Prostate gland (tissue), 2 donors: ENCODE measurements at regions of chr18 and their contacts with region 1.

Region 1: DNA sequence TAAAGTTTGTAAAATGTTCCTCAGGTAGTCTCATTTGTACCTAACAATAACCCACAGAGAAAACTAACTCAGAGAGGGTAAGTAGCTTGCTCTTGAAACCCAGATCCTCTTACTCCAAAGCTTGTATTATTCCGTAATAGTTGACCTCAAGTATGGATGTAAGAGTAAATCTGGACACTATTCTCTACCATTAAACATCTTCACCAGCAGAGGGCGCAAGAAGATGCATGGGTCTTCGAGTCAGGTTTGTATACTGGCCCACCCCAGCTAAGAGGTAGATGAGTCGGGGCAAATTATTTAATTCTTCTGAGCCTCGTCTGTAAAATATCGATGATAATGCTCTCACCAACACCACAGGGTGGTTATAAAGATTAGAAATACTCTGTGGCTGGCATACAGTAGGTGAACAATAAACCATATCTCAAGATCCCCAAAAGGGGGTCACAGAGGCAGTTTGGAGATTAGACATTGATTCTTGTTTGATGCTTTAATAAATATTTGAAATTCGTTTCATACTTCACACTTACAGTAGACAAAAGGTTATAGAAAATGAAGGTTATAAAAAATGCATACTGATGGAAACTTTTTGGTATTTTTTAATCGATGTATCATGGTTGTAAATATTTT is 3.5 kb upstream of the CABLES1 start:
- DNase-seq: peak; percentile 77
- H3K4me3 ChIP-seq: no peak overlapping the region
- H3K27ac ChIP-seq: no peak overlapping the region
- H3K4me1 ChIP-seq: no peaks in the 10 kb centered on the region
- H3K27me3 ChIP-seq: no peaks in the 10 kb centered on the region
- CTCF ChIP-seq: peak; percentile 76 to 86 (median 81)
- POLR2A ChIP-seq: no peak

Region 2: DNA sequence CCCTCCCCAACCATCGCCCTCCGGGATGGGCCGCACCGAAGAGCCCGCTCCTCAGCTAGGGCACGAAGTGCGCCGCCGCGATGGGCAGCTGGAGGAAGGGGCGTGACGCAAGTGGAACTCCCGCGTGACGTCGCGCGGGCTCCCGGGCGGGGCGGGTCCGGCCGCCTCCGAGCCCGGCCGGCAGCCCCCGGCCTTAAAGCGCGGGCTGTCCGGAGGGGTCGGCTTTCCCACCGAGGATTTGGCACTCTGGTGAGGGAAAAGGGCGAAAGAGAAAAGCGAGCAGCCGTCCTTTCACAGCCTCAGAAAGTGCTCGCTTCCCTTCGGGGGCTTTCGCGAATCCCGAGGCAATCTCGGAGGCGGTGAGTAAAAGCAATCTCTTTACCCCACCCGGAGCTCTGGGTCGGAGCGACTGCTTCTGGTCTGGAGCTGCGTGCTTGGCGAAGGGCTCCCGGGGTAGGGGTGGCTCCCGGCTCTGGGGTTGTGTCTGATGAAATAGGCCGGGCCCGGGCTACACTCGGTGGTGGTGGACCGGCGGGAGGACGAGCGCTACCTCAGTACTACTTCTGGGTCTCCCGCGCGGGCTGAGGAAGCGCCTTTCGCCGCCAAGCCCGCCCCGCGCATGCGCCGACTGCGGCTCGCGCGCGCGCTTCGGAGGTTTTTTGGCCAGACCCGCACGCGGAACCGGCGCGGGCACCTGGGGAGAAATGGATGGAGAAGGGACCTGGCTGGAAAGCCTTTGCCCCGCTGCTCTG is 198.4 kb before region 1 on chr18 and contains the start of gene RBBP8:
- intact Hi-C with region 1: loop called (anchors 10 kb)
- DNase-seq: peak; percentile 84
- H3K4me3 ChIP-seq: peak within 1 kb of the TSS; percentile 85 to 90
- H3K27ac ChIP-seq: peak within 1 kb of the TSS; percentile 99
- H3K4me1 ChIP-seq: no peaks in the 10 kb centered on the region
- H3K27me3 ChIP-seq: no peaks in the 10 kb centered on the region
- CTCF ChIP-seq: peak in 1 of 4 experiments; percentile 31
- POLR2A ChIP-seq: peak; percentile 73
- total RNA-seq, gene RBBP8: 31.8 to 44.6 TPM

Region 3: DNA sequence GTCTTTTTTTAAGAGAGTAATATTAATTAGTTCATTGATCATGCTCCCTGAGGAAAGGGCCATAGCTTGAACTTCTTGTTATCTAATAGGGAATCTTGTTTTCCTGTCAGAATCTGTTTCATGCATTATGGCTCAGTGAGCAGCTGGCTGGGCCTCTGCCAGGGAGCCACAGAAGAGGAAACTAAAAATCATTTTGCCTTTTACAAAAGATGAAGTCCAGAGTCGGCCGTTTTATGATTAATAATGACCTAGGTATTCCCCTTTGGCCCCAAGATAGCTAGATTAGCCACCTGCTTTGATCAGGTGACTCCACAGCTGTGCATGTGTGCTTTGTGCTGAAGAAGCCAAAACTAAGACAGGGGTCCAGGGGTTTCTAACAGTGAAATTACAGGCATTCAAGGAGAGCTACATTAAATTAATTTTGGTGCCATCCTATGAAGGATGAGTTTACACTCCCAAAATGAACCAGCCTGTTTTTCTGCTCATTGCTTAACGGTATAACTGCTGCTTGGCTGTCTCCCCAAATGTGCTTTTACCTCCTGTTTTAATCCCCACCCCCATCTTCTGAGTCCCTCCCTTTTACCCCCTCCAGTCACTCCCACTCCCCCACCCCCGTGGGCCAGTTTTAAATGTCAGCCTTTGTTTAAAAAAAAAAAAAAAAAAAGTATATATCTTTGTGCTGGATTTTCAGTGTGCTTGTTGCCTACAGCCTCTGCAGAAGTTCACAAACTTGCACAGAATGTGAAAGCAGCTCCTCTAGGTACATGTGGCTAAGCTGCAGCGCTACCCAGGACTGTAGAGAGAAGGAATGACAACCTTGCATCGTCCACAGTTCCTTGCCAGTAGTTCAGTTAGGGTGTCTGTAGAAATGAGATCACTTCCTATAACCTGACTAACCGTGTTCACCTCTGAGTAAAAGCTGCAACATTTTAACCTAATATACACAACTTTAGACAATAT is 96.6 kb after region 1 on chr18:
- intact Hi-C with region 1: loop called (anchors 2 kb)
- DNase-seq: no peak
- H3K4me3 ChIP-seq: no peak overlapping the region
- H3K27ac ChIP-seq: no peak overlapping the region
- H3K4me1 ChIP-seq: no peaks in the 10 kb centered on the region
- H3K27me3 ChIP-seq: no peaks in the 10 kb centered on the region
- CTCF ChIP-seq: no peak
- POLR2A ChIP-seq: no peak

Region 4: GRCh38 chr18:23377669-23378301 is 246.0 kb after region 1 on chr18:
- intact Hi-C with region 1: loop called (anchors 2 kb)
- DNase-seq: no peak
- H3K4me3 ChIP-seq: no peak overlapping the region
- H3K27ac ChIP-seq: peak overlapping the region in 1 of 2 donors; percentile 9
- H3K4me1 ChIP-seq: no peaks in the 10 kb centered on the region
- H3K27me3 ChIP-seq: no peaks in the 10 kb centered on the region
- CTCF ChIP-seq: no peak
- POLR2A ChIP-seq: no peak

Region 5: DNA sequence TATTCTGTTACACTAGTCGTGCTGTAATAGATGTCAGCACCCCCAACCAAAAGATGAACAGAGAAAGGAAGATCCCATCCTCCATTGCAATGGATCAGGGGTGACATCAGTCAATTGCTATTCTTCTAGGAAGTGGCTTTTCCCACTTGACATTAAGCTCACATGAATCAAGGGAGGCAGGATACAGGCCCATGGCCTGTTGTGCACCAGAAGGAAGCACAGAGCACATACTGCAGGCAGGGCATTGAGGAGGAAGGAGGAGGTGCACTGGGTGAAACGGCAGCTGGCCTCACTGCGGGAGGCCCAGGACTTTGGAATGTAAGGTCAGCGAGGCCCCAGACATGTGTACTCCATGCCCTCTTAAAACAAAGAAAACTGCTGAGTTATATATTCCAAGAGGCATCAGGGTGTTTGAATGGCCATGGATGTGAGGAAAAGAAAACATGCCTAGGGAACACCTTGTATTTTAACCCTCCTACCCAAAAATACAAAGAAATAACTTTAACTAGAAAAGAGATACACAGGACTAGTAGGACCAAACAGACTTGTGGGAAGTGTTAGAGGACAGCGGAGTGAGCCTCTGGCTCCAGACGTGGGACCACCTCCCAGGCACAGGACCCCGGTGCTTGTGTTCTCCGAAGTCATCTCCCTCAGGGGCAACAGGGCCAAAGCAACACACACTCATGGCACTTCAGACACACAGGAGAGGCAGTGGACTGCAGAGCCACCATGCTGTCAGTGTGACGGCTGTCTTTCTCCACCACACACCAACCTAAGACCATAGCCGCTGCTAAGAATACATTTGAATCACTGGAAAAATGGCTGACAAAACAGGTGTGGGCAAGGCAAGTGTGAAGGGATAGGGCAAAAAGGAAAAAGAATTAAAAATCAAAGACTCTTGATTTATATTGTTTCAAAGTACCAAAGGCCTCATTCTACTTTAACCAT is 269.9 kb after region 1 on chr18:
- intact Hi-C with region 1: no loop called
- DNase-seq: no peak
- H3K4me3 ChIP-seq: no peak overlapping the region
- H3K27ac ChIP-seq: no peak overlapping the region
- H3K4me1 ChIP-seq: no peaks in the 10 kb centered on the region
- H3K27me3 ChIP-seq: no peaks in the 10 kb centered on the region
- CTCF ChIP-seq: no peak
- POLR2A ChIP-seq: no peak

Region 6: GRCh38 chr18:23586249-23587196 is 454.7 kb after region 1 on chr18 and contains the start of gene NPC1:
- intact Hi-C with region 1: loop called (anchors 10 kb)
- DNase-seq: peak; percentile 91
- H3K4me3 ChIP-seq: peak within 1 kb of the TSS; percentile 79 to 92
- H3K27ac ChIP-seq: peak within 1 kb of the TSS; percentile 100
- H3K4me1 ChIP-seq: no peaks in the 10 kb centered on the region
- H3K27me3 ChIP-seq: no peaks in the 10 kb centered on the region
- CTCF ChIP-seq: peak; percentile 94 to 97 (median 96)
- POLR2A ChIP-seq: peak; percentile 85
- total RNA-seq, gene NPC1: 32.0 to 63.5 TPM